BJ (cell line): ENCODE measurements at regions of chr18 and their contacts with region 1.

Region 1: DNA sequence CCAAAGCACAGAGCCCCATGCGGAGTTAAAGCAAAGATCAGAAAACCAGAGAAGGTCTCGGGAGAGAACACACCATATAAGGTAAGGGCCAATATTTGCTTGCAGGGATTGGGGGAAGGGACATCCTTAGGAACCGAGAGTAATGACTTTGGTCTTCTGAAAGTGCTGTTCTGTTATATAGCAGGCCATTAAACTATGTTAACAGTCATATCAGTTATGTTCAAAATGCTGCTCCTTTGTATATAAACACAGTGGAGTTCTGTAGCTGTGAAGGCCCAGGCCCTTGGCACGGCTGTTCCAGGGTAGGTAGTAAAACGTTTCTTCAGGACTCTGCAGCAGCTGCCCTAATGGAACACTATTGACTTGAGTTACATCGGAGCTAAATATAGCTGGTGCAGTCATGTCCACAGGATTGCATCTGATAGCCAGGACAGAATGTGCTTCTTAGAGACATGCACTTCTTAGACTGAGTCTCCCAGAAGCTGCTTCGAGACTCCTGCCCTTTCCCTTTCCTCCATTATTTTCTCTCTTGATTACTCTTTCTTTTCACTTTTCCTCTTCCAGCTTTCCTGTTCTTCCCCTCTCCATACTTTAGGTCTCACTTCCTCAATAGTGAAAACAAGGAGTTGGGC is 122.4 kb downstream of the SETBP1 start:
- DNase-seq: no peak
- H3K4me3 ChIP-seq: no peak overlapping the region
- H3K27me3 ChIP-seq: no peaks in the 10 kb centered on the region; the same call in 1 of the 2 replicates
- CTCF ChIP-seq: no peak

Region 2: GRCh38 chr18:45413180-45413836 is 610.2 kb after region 1 on chr18:
- CTCF ChIA-PET with region 1: no interaction called
- POLR2A ChIA-PET with region 1: interaction called, 10 read pairs
- DNase-seq: no peak
- H3K4me3 ChIP-seq: no peak overlapping the region
- H3K27me3 ChIP-seq: no peaks in the 10 kb centered on the region; the same call in 1 of the 2 replicates
- CTCF ChIP-seq: no peak